Mammary epithelial cell (primary cell): ENCODE measurements at regions of chr9 and their contacts with region 1.

Region 1: DNA sequence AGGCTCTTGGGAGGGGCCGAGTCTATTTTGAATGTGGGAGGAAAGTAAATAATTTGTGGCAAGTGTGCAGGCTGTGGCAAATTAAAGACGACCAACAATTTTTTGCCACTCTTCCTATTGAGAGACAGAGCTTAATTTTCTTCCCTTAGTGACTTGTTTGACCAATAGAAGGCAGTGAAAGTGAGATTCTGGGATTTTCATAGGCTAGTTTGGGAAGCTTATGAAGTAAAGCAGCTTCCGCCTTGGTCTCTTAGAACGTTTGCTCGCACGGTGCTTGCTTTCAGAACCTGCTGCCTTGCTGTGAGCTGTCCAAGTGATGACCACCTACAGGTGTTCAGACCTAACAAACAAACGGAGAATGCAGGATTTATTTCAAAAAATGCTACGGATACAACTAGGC is 6.7 kb upstream of the OR1N2 start:
- DNase-seq: no peak
- H3K4me3 ChIP-seq: no peak overlapping the region
- H3K27ac ChIP-seq: no peak overlapping the region
- H3K4me1 ChIP-seq: peaks cover 4% of the 10 kb centered on the region
- H3K27me3 ChIP-seq: no peaks in the 10 kb centered on the region
- CTCF ChIP-seq: no peak

Region 2: DNA sequence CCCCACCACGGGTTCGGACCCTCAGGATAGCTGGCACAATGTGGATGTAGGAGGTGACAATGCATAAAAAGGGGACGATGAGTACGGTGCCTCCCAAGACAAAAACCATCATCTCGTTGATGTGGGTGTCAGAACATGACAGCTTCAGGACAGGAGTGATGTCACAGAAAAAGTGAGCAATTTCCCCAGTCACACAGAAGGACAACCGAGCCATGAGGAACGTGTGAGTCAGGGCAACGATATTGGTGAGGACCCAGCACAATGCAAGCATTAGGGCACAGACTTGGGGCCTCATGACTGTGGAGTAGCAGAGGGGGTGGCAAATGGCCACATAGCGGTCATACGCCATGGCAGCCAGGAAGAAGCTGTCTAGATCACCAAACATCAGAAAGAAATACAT is 19.6 kb before region 1 on chr9:
- CTCF ChIA-PET with region 1: no interaction called
- dilution Hi-C with region 1: no loop called
- in situ Hi-C with region 1: no loop called
- intact Hi-C with region 1: no loop called
- DNase-seq: no peak
- H3K4me3 ChIP-seq: no peak overlapping the region
- H3K27ac ChIP-seq: no peak overlapping the region
- H3K4me1 ChIP-seq: no peaks in the 10 kb centered on the region
- H3K27me3 ChIP-seq: no peaks in the 10 kb centered on the region
- CTCF ChIP-seq: no peak

Region 3: GRCh38 chr9:122609806-122610205 is 63.6 kb after region 1 on chr9:
- CTCF ChIA-PET with region 1: no interaction called
- dilution Hi-C with region 1: no loop called
- in situ Hi-C with region 1: loop called in 1 of 2 experiments (anchors 10 kb)
- intact Hi-C with region 1: no loop called
- DNase-seq: no peak
- H3K4me3 ChIP-seq: no peak overlapping the region
- H3K27ac ChIP-seq: no peak overlapping the region
- H3K4me1 ChIP-seq: no peaks in the 10 kb centered on the region
- H3K27me3 ChIP-seq: no peaks in the 10 kb centered on the region
- CTCF ChIP-seq: no peak

Region 4: GRCh38 chr9:122846371-122846940 is 300.3 kb after region 1 on chr9:
- CTCF ChIA-PET with region 1: no interaction called
- dilution Hi-C with region 1: no loop called
- in situ Hi-C with region 1: no loop called
- intact Hi-C with region 1: no loop called
- DNase-seq: no peak
- H3K4me3 ChIP-seq: no peak overlapping the region
- H3K27ac ChIP-seq: no peak overlapping the region
- H3K4me1 ChIP-seq: no peaks in the 10 kb centered on the region
- H3K27me3 ChIP-seq: no peaks in the 10 kb centered on the region
- CTCF ChIP-seq: no peak